Dorsolateral prefrontal cortex (tissue), 120 donors: ENCODE measurements at regions of chr5 and their contacts with region 1.

Region 1: DNA sequence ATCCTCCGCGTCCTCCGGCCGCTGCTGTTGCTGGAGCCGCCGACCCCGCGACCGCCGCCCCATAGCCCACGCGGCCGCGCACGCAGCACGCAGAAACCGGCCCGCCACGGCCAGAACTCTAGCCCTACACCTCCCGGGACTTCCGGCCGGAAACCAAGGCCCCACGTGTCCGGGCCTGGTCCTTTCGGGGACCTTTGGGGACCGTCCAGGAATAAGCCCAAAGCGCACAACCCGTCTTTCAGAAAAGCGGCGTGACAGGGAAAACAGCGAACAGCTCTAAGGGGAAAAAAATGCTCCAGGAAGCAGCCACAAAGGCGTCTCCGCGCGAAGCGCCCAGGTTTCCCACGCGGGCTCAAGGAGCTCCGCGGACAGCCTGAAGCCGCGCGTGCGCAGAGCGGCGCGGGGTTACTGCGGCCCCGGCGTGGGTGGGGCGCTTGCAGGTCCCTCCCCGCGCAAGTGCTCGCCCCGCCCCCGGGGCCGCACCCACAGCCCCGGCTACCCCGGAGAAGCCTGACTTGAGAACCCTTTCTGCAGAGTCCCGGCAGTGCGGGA is at the starts of genes NSUN2 and SRD5A1:
- DNase-seq: peak; percentile 83 to 93 (median 90)
- H3K4me3 ChIP-seq: peak within 1 kb of the TSS; percentile 68 to 100 (median 96)
- H3K27ac ChIP-seq: peak within 1 kb of the TSS; percentile 45 to 100 (median 97)
- H3K27me3 ChIP-seq: no peaks in the 10 kb centered on the region
- CTCF ChIP-seq: peak in 16 of 56 donors; percentile 4 to 48 (median 18)
- total RNA-seq, gene NSUN2: 23.9 to 79.2 (median 38.6) TPM
- total RNA-seq, gene SRD5A1: 15.2 to 41.5 (median 25.7) TPM

Region 2: GRCh38 chr5:6712577-6713275 is 79.7 kb after region 1 on chr5:
- intact Hi-C with region 1: loop called (anchors 1 kb)
- DNase-seq: peak; percentile 89 to 97 (median 94)
- H3K4me3 ChIP-seq: peak overlapping the region; percentile 55 to 98 (median 88)
- H3K27ac ChIP-seq: peak overlapping the region; percentile 57 to 99 (median 97)
- H3K27me3 ChIP-seq: no peaks in the 10 kb centered on the region
- CTCF ChIP-seq: peak in 20 of 56 donors; percentile 0 to 60 (median 22)

Region 3: DNA sequence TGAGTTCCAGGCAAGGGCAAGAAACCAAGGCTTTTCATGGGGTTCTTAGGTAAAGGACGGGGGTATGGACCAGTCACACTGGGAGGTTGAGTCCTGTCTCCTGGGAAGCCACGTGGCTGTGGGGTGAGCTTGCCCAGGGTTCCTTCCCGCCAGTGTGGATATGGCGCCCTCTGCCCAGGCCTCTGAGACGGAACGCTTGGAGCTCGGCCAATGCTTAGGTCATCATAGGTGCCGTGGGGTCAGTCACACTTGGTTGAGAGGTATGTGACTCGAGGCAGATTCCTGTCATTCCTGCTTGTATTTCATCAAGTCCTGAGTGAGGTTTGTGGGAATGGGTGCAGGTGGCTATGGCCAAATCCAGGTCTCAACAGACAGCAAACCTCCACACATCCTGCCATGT is 126.4 kb after region 1 on chr5:
- intact Hi-C with region 1: no loop called
- DNase-seq: no peak
- H3K4me3 ChIP-seq: no peak overlapping the region
- H3K27ac ChIP-seq: no peak overlapping the region
- H3K27me3 ChIP-seq: no peaks in the 10 kb centered on the region
- CTCF ChIP-seq: no peak

Region 4: DNA sequence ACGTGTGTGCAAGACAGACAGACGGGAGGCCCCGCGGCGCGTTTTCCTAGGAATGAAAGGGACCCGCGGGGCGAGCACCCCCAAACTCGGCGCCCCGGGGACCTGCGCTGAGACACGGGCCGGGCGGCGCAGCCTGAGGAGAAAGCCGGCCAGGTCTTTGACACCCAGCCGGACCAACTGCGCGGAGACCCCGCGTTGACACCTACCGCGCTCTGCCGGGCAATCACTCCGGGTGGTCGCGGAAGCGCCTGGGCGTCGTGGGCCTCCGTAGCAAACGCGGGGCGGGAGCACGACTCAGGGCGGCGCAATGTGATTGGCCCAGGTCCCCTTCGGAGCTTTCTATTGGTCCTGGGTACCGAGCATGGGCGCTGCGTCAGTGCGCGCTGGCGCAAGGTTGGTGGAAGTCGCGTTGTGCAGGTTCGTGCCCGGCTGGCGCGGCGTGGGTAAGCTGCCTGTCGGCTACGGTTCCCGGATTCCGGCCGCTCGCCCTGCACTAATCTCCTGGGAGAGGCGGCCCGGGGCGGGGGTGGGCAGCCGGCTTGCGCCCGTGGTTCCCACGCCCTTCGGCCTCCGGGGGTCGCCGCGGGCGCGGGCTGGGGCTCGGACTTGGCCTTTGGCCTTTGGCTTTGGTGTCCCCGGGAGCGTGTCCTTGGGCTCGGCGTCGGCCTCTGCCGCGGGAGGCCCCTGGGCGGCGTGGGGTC is 1235.9 kb after region 1 on chr5 and contains the starts of genes FASTKD3 and MTRR:
- intact Hi-C with region 1: loop called in 1 of 2 experiments (anchors 5 kb)
- DNase-seq: peak; percentile 92 to 97 (median 96)
- H3K4me3 ChIP-seq: peak within 1 kb of the TSS; percentile 80 to 100 (median 98)
- H3K27ac ChIP-seq: peak within 1 kb of the TSS in 57 of 59 donors; percentile 3 to 93 (median 77)
- H3K27me3 ChIP-seq: no peaks in the 10 kb centered on the region
- CTCF ChIP-seq: peak in 24 of 56 donors; percentile 1 to 52 (median 22)
- total RNA-seq, gene FASTKD3: 4.4 to 16.7 (median 10.2) TPM
- total RNA-seq, gene MTRR: 42.8 to 132 (median 64.0) TPM